ENCODE measurements at regions of chr5 and their contacts with region 1.

Region 1: DNA sequence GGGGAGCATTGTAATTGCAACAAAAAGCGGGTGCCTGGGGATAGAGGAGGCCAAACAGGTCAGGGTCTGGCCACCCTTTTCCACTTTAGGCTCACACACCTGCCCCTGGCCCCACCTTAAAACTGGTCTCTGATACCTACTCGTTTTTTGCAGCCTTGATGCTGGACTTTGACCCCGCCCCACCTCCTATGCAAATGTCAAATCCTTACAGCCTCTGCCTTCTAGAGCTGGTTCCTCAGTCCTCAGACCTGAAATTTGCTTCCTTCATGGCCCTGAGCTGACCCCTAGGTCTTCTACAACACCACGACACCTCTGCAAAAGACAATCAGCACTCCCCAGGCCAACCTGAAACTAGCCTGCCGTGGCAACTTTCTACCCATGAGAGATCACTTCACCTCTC is 37.7 kb downstream of the SMIM23 start:
- DNase-seq: no peak
- H3K4me3 ChIP-seq: no peak overlapping the region
- H3K27ac ChIP-seq: no peak overlapping the region
- H3K4me1 ChIP-seq: no peaks in the 10 kb centered on the region
- H3K27me3 ChIP-seq: peaks cover 0 to 3% (median 0%) of the 10 kb centered on the region in 5 experiments

Region 2: DNA sequence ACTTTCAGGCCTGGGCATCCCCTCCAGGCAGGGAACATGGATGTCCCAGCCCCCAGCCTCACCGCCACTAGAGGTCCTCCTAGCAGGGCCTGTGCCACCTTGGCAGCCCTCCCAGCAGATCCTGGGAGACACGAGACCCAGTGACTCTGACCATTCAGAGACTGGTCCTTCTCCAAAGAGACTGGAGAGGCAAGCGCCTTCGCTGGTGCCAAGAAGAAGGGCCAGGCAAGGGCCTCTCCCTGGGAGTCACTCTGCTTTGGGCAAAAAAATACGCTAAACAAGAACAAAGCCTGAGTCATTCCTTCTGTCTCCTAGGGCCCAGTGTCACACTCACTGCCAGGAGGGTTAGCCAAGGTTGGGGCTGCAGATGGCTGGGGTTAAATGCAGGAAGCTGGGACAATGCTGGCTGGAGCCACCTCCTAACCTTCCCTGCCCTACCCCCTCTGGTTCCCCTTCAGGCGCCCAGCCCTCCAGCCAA is 72.9 kb before region 1 on chr5:
- CTCF ChIA-PET with region 1: no interaction called
- POLR2A ChIA-PET with region 1: no interaction called
- DNase-seq: peak in 2 of 3 donors; percentile 13 to 26
- H3K4me3 ChIP-seq: no peak overlapping the region
- H3K27ac ChIP-seq: no peak overlapping the region
- H3K4me1 ChIP-seq: no peaks in the 10 kb centered on the region
- H3K27me3 ChIP-seq: no peaks in the 10 kb centered on the region

Region 3: DNA sequence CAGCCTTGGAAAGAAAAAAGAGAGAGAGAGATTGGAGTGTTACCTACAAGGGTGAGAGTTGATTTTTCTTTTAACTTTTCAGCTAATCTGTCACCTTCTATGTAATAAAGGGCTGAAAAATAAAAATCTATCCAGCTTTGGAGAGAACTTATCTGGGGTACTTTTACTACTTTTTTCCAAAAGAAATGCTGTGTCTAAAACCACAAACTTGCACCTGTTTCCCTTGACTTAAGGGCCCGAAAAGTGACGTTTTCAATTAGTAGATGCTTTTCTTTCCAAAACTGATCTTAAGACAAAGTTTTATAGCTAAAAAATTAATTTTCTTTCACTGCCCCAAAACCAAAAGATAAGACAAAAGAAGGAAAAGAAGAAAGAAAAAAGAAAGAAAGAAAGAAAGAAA is 11.2 kb after region 1 on chr5:
- CTCF ChIA-PET with region 1: interaction called, 12 read pairs
- POLR2A ChIA-PET with region 1: no interaction called
- DNase-seq: peak in 2 of 3 donors; percentile 38 to 51
- H3K4me3 ChIP-seq: no peak overlapping the region
- H3K27ac ChIP-seq: peak overlapping the region in 1 of 2 experiments; percentile 29
- H3K4me1 ChIP-seq: peaks cover 5 to 14% (median 9%) of the 10 kb centered on the region in 4 experiments
- H3K27me3 ChIP-seq: no peaks in the 10 kb centered on the region

Measured in common myeloid progenitor, CD34-positive (primary cell).